ENCODE measurements at regions of chr9 and their contacts with region 1.

Region 1: DNA sequence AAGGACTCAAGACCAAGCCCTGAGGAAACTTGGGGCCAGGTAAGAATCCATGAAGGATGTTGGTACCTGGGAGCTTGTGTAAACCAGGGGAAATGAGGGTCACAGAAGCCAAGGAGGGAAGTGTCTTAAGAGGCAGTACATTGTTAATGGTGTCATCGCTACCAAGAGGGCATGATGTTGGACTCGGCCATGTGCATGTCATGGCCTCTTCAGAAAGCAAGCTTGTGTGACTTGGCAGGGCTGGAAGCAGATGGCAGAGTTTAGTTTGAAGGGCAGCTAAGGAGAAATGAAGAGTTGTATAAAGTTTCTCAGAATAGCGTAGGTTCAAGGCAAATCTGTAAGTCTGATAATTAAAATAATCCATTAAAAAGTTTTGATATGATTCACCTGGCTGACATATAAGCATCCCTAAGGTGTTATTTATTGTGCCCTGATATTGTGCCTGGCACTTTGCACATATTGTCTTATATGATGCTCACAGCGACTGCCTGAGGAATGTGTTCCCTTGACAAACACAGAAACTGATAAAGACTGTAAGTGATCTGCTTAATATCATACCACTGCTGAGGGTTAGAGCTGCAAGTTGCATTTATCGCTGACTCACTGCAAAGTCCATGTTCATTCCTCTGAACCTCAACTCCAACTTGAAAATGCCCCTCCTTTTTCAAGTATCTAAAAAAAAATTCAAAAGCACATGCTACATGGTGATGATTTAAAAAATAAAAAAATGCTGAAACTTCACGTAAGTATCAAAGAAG is 81.3 kb upstream of the PTPN3 start:
- DNase-seq: no peak
- H3K4me3 ChIP-seq: no peak overlapping the region
- H3K27ac ChIP-seq: no peak overlapping the region
- H3K4me1 ChIP-seq: no peaks in the 10 kb centered on the region
- CTCF ChIP-seq: no peak

Region 2: DNA sequence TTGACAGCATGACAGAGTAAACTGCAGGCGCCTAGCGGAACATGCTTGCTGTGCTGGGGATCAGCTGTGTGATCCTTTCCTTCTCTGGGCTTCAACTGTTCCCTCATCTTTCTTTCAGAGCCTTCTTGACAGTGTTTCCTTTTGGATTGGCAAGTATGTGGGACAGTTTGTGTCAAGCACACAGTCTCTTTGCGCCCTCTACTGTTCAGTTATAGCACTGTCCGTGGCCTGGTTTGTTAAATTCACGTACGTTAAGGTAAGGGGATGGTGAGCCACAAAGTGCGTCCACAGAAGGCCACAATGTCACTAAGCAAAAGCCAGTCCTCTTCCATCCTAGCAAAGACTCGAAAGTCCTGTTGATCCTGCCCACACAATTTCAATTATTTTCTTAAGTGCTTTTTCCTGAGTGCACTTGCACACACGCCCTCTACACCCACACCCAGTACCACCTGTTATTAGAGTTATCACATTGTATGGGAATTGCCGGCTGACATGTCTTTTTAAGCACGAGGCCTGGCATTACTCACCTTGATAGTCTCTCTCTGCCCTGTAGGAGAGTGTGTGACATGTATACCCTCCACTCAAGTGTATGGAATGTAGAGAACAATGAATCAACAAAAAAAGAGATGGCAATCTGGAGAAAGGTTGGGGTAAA is 58.8 kb before region 1 on chr9:
- CTCF ChIA-PET with region 1: no interaction called
- POLR2A ChIA-PET with region 1: no interaction called
- intact Hi-C with region 1: no loop called
- DNase-seq: peak; percentile 60
- H3K4me3 ChIP-seq: no peak overlapping the region
- H3K27ac ChIP-seq: no peak overlapping the region
- H3K4me1 ChIP-seq: no peaks in the 10 kb centered on the region
- CTCF ChIP-seq: peak; percentile 94

Region 3: GRCh38 chr9:109536859-109537258 is 42.5 kb before region 1 on chr9:
- CTCF ChIA-PET with region 1: no interaction called
- POLR2A ChIA-PET with region 1: no interaction called
- intact Hi-C with region 1: no loop called
- DNase-seq: no peak
- H3K4me3 ChIP-seq: no peak overlapping the region
- H3K27ac ChIP-seq: no peak overlapping the region
- H3K4me1 ChIP-seq: no peaks in the 10 kb centered on the region
- CTCF ChIP-seq: no peak

Region 4: DNA sequence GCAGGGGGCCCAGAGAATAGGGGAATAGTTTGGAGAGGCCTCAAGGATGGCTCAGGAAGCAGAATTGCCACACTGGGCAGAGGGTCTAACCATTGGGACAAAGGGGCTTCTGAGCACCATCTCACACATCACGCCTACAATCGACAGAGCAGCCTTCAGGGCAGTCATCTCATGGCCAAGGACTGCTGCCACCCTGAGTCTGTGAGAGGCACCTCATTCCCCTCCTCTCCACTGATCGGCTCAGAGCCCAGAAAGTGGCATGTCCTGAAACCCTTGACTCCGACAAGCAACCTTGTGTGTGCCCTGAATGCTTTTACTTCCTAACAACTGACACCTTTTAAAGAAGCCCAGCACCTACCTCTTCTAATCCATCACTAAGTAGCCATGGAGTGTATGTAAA is 47.7 kb after region 1 on chr9:
- CTCF ChIA-PET with region 1: no interaction called
- POLR2A ChIA-PET with region 1: no interaction called
- intact Hi-C with region 1: no loop called
- DNase-seq: no peak
- H3K4me3 ChIP-seq: no peak overlapping the region
- H3K27ac ChIP-seq: no peak overlapping the region
- H3K4me1 ChIP-seq: no peaks in the 10 kb centered on the region
- CTCF ChIP-seq: no peak

Region 5: DNA sequence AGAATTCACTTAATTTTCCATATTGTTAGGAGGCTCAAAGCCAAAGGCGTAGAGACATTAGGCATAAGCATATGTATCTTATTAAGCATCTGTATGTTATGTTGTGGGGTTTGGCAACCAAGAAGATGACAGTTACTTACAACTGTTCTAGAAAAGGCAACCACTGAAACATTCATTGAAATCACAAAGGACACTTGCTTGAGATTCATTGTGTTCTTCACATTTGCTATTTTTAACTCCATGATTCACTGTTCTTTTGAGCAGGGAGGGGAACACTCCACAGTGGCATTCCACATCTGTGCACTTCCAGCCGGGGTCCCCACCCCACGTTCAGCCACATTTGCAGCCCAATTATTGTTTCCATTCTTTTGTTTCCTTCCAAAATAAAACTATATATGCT is 307.7 kb after region 1 on chr9:
- CTCF ChIA-PET with region 1: no interaction called
- POLR2A ChIA-PET with region 1: no interaction called
- intact Hi-C with region 1: loop called (anchors 5 kb)
- DNase-seq: no peak
- H3K4me3 ChIP-seq: no peak overlapping the region
- H3K27ac ChIP-seq: no peak overlapping the region
- H3K4me1 ChIP-seq: no peaks in the 10 kb centered on the region
- CTCF ChIP-seq: no peak

Measured in OCI-LY7 (cell line).